PC-9 (cell line): ENCODE measurements at regions of chr6 and their contacts with region 1.

Region 1: DNA sequence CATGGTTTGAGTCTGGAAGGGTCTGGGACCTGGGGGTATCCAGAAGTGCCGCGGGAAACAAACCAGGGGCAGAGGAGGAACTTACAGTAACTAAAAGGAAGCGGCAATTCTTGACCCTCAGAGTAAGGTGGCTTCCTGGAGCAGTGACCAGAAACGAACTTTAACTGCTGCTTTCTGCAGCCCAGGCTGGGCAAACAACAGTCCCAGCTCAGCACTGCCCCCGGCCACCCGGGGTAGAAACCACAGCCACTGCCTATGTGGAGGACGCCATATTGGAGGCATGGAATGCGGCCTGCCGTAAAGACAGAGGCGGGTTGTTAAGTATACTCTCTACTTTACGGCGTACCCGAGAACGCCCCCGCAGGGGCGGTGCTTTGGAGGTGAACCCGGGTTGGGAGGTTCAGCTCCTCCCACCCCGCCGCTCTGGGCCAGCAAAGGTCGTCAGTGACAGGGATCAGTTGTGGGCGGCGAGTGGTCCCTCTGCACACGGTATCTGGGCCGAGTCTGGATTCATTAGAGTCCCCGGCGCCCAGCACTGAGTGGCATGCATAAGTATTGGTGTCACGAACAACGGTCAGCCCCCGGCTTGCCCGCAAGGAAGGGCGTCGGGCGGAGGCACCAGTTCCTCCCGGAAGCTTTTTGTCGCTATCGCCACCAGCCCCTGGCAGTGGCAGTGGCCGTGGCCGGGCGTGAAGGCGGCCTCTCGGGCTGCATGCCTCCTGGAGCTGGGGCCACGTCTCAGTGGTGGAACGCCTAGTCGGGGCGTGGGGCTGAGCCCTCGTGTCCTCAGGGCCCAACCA is at the start of gene PDSS2:
- DNase-seq: peak; percentile 96
- H3K4me3 ChIP-seq: peak within 1 kb of the TSS; percentile 82
- H3K27ac ChIP-seq: peak within 1 kb of the TSS; percentile 67
- H3K4me1 ChIP-seq: peaks cover 20% of the 10 kb centered on the region
- H3K27me3 ChIP-seq: no peaks in the 10 kb centered on the region
- CTCF ChIP-seq: peak; percentile 57; the same call in 1 of the 2 replicates
- total RNA-seq, gene PDSS2: 17.2 and 17.8 TPM in 2 replicates

Region 2: GRCh38 chr6:106199998-106200397 is 1259.5 kb before region 1 on chr6:
- CTCF ChIA-PET with region 1: no interaction called
- POLR2A ChIA-PET with region 1: no interaction called
- intact Hi-C with region 1: no loop called
- DNase-seq: no peak
- H3K4me3 ChIP-seq: no peak overlapping the region
- H3K27ac ChIP-seq: no peak overlapping the region
- H3K4me1 ChIP-seq: peaks cover 11% of the 10 kb centered on the region
- H3K27me3 ChIP-seq: no peaks in the 10 kb centered on the region
- CTCF ChIP-seq: no peak

Region 3: DNA sequence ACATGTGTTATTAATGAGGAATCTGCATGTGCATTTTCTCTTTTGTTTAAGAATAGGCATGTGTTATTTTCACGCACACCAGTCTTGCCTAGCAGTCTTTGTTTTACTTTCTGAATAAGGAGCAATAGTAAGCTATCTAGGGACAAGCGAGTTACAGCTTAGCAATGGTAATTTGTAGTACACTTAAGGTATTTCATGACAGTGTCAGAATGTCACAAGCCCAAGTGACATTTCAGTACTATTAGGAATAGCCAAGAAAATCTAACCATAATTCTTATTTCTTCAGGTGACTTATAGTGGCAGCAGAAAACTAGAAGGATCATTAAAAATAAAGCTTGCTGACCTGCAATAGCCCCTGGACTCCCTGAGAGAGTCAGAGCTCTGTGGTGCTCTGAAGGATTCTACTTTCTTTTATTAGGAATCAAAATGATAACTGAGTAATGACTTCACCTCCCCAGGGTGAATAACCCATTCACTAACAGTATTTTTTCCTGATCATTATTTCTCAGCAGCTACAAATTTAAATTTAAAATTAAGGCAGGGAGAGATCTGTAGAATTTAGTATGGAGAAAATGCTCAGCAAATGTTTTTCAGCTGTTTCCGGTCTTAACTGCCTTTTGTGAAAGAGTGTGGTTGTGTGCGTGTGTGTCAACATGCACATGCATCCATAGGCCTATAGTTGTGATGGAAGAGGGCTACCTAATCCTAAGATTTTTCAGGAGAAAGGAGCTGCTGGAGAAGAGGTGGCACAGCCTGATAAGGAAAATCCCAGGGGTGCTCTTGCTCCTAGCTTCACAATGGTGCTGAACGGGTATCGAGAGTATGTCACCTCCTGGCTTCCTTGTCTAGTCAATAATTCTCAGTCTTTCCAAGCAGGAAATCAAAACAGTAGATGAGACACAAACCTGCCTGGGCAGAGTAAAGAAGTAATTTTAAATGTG is 254.2 kb before region 1 on chr6:
- CTCF ChIA-PET with region 1: interaction called, 15 read pairs
- POLR2A ChIA-PET with region 1: no interaction called
- intact Hi-C with region 1: no loop called
- DNase-seq: no peak
- H3K4me3 ChIP-seq: no peak overlapping the region
- H3K27ac ChIP-seq: no peak overlapping the region
- H3K4me1 ChIP-seq: peaks cover 23% of the 10 kb centered on the region
- H3K27me3 ChIP-seq: no peaks in the 10 kb centered on the region
- CTCF ChIP-seq: no peak

Region 4: GRCh38 chr6:107657755-107658461 is 198.4 kb after region 1 on chr6:
- CTCF ChIA-PET with region 1: no interaction called
- POLR2A ChIA-PET with region 1: no interaction called
- intact Hi-C with region 1: loop called (anchors 5 kb)
- DNase-seq: peak; percentile 36 to 44
- H3K4me3 ChIP-seq: no peak overlapping the region
- H3K27ac ChIP-seq: 0 out of 2 replicates have a peak overlapping the region, but pooled peaks have one; percentile 5
- H3K4me1 ChIP-seq: peaks cover 27% of the 10 kb centered on the region
- H3K27me3 ChIP-seq: no peaks in the 10 kb centered on the region
- CTCF ChIP-seq: no peak